ENCODE measurements at regions of chr9 and their contacts with region 1.

Region 1: GRCh38 chr9:72280913-72281500 is 84.0 kb downstream of the ZFAND5 start:
- DNase-seq: peak; percentile 61 to 78 (median 66)
- H3K4me3 ChIP-seq: no peak overlapping the region
- H3K4me3 Mint-ChIP-seq: no peak overlapping the region
- H3K27ac ChIP-seq: no peak overlapping the region
- H3K27ac Mint-ChIP-seq: no peak overlapping the region
- H3K4me1 ChIP-seq: peaks cover 0 to 3% of the 10 kb centered on the region in 2 donors
- H3K4me1 Mint-ChIP-seq: peaks cover 5% of the 10 kb centered on the region
- H3K27me3 ChIP-seq: no peaks in the 10 kb centered on the region
- H3K27me3 Mint-ChIP-seq: peaks cover 0 to 4% (median 0%) of the 10 kb centered on the region in 3 donors
- CTCF ChIP-seq: peak; percentile 91

Region 2: DNA sequence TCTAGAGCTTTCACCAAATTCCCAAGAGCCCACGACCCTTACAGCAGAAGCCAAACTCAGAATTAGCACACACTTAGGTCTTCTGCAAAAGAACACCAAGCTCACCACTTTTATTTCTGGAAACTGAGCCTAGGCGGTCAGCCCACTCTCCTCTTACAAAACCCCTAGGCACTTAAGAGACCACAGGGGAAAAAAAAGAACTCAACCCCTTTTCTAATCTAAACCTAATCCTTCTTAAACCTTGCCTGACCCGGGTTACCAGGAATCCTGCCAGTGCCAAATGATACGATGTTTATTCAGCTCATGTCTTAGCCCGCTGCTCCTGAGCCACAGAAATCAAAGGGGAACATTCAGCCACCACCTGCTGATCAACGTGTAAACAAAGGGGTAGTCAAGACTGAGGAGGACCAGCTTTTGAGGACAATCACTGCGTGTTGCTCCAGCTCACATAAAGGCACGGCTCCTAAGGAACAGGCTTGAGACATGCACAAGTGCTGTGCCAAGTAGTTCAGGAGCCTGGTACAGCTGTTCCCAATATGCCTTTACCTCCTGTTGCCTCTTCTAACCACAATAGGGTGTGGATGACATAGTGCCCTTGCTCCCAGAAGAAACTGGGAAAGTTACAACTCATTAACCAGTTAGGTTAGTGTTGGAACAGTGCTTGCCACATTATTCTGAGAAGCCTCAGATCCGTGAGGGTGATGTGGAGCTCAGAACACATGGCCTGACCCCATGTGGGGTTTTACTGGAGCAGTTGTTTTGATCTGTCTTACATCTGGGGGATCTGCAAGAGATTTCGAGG is 34.7 kb after region 1 on chr9:
- intact Hi-C with region 1: loop called in 1 of 2 experiments (anchors 5 kb)
- DNase-seq: no peak
- H3K4me3 ChIP-seq: no peak overlapping the region
- H3K4me3 Mint-ChIP-seq: peak overlapping the region in 1 of 2 donors; percentile 7
- H3K27ac ChIP-seq: peak overlapping the region in 1 of 2 donors; percentile 57
- H3K27ac Mint-ChIP-seq: peak overlapping the region; percentile 10 to 83 (median 59)
- H3K4me1 ChIP-seq: peaks cover 48 to 53% of the 10 kb centered on the region in 2 donors
- H3K4me1 Mint-ChIP-seq: peaks cover 60% of the 10 kb centered on the region
- H3K27me3 ChIP-seq: no peaks in the 10 kb centered on the region
- H3K27me3 Mint-ChIP-seq: peaks cover 0 to 1% (median 0%) of the 10 kb centered on the region in 3 donors
- CTCF ChIP-seq: no peak

Region 3: GRCh38 chr9:72592502-72593403 is 311.7 kb after region 1 on chr9:
- intact Hi-C with region 1: loop called in 1 of 2 experiments (anchors 5 kb)
- DNase-seq: peak; percentile 60 to 74 (median 73)
- H3K4me3 ChIP-seq: peak overlapping the region in 1 of 3 experiments; percentile 5
- H3K4me3 Mint-ChIP-seq: peak overlapping the region in 1 of 2 donors; percentile 66
- H3K27ac ChIP-seq: peak overlapping the region; percentile 51 to 71
- H3K27ac Mint-ChIP-seq: peak overlapping the region; percentile 85 to 96 (median 92)
- H3K4me1 ChIP-seq: peaks cover 72 to 77% of the 10 kb centered on the region in 2 donors
- H3K4me1 Mint-ChIP-seq: peaks cover 71% of the 10 kb centered on the region
- H3K27me3 ChIP-seq: no peaks in the 10 kb centered on the region
- H3K27me3 Mint-ChIP-seq: peaks cover 0 to 4% (median 2%) of the 10 kb centered on the region in 3 donors
- CTCF ChIP-seq: peak; percentile 98

Region 4: GRCh38 chr9:72827950-72828731 is 547.1 kb after region 1 on chr9:
- intact Hi-C with region 1: loop called (anchors 2 to 5 kb)
- DNase-seq: no peak
- H3K4me3 ChIP-seq: no peak overlapping the region
- H3K4me3 Mint-ChIP-seq: no peak overlapping the region
- H3K27ac ChIP-seq: no peak overlapping the region
- H3K27ac Mint-ChIP-seq: no peak overlapping the region
- H3K4me1 ChIP-seq: no peaks in the 10 kb centered on the region
- H3K4me1 Mint-ChIP-seq: peaks cover 5% of the 10 kb centered on the region
- H3K27me3 ChIP-seq: peaks cover 0 to 1% of the 10 kb centered on the region in 2 donors
- H3K27me3 Mint-ChIP-seq: peaks cover 1 to 2% (median 2%) of the 10 kb centered on the region in 3 donors
- CTCF ChIP-seq: no peak

Region 5: GRCh38 chr9:73023025-73023541 is 742.1 kb after region 1 on chr9:
- intact Hi-C with region 1: loop called in 1 of 2 experiments (anchors 5 kb)
- DNase-seq: peak; percentile 36 to 62 (median 44)
- H3K4me3 ChIP-seq: no peak overlapping the region
- H3K4me3 Mint-ChIP-seq: no peak overlapping the region
- H3K27ac ChIP-seq: no peak overlapping the region
- H3K27ac Mint-ChIP-seq: no peak overlapping the region
- H3K4me1 ChIP-seq: no peaks in the 10 kb centered on the region
- H3K4me1 Mint-ChIP-seq: peaks cover 6% of the 10 kb centered on the region
- H3K27me3 ChIP-seq: no peaks in the 10 kb centered on the region
- H3K27me3 Mint-ChIP-seq: no peaks in the 10 kb centered on the region
- CTCF ChIP-seq: peak; percentile 94

Measured in CD14-positive monocyte (primary cell).